CD14-positive monocyte (primary cell): ENCODE measurements at regions of chr2 and their contacts with region 1.

Region 1: DNA sequence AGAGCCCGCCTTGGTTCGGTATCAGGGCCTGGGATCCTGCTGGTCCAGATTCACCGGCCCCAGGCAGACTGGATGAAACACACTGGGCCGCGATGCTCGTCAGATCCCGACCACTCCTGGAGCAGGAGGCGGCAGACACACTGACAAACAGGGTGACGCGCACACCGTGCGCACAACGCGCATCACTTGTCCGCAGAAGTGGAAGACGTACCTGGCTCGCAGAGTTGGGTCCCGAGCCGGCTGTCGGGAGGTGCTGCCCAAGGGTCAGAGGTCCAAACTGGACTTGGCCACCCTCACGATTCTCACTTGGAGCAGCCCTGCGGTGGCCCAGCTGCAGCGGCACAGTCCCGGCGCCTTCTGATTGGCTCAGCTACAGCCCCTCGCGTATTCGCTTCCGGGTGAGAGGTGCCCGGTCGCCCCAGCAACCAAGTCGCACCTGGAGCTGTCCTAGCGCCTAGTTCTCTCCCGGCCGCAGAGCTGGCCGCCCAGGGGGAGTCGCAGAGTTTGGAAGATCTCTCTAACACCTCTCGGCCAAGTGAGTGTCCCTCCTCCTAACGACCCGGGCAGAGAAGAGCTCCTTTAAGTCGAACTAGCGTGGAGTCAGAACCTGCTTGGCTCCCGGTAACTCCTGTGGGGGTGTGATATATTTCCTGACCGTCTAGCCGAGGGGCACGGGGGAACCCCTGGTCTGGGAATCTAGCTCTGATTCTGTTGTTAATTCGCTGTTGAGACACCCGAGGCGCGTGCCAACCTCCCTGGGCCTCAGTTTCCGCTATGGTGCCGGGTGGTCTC is at the starts of genes DHX57 and MORN2:
- DNase-seq: peak; percentile 69 to 78 (median 74)
- H3K4me3 ChIP-seq: peak within 1 kb of the TSS; percentile 55 to 94 (median 77)
- H3K4me3 Mint-ChIP-seq: peak within 1 kb of the TSS; percentile 96
- H3K27ac ChIP-seq: peak within 1 kb of the TSS; percentile 6 to 78
- H3K27ac Mint-ChIP-seq: peak within 1 kb of the TSS; percentile 77 to 96 (median 94)
- H3K4me1 ChIP-seq: peaks cover 15 to 17% of the 10 kb centered on the region in 2 donors
- H3K4me1 Mint-ChIP-seq: peaks cover 31% of the 10 kb centered on the region
- H3K27me3 ChIP-seq: no peaks in the 10 kb centered on the region
- H3K27me3 Mint-ChIP-seq: no peaks in the 10 kb centered on the region
- CTCF ChIP-seq: no peak
- polyA plus RNA-seq, gene DHX57: 7.7 to 13.4 (median 12.9) TPM
- polyA plus RNA-seq, gene MORN2: 5.8 to 25.8 (median 24.0) TPM

Region 2: DNA sequence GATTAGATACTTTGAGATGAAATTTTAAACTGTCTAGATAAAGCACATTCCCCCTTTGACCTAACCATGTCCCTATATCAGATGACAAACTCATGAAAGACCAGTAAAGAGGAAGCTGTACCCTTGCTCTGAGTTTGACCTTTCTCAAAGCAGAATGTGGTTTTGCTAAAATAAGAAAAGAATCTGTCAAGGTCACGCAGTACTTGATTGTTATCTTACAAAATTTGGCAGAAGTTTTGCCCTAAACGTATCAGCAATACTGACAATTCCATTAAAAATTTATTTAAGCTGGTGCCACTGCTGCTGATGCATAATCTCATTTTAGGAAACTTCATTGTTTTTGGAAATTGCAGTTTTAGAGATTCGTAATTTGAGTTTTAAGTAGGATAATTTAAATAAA is 241.1 kb before region 1 on chr2:
- intact Hi-C with region 1: no loop called
- DNase-seq: peak; percentile 48 to 59 (median 56)
- H3K4me3 ChIP-seq: no peak overlapping the region
- H3K4me3 Mint-ChIP-seq: no peak overlapping the region
- H3K27ac ChIP-seq: no peak overlapping the region
- H3K27ac Mint-ChIP-seq: no peak overlapping the region
- H3K4me1 ChIP-seq: peaks cover 15 to 17% of the 10 kb centered on the region in 2 donors
- H3K4me1 Mint-ChIP-seq: peaks cover 19% of the 10 kb centered on the region
- H3K27me3 ChIP-seq: no peaks in the 10 kb centered on the region
- H3K27me3 Mint-ChIP-seq: peaks cover 0 to 6% (median 5%) of the 10 kb centered on the region in 3 donors
- CTCF ChIP-seq: no peak

Region 3: DNA sequence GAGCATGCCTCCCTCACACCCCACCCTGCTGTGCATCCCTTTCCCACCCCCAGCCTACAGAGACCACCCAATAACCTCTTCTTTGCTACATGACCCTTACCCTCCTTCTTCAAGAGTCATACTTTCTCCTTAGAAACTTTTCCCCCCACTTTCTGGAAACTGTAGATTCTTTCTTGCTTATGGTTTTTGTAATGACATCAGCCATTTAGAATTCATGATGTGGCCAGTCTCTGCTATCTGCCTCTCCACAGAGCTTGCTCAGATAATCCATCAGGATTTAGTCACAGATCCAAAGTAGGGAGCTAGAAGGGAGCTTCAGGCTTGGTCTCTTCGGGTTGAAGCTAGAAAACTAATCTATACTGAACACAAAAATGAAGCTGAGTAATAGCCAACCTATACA is 173.4 kb before region 1 on chr2:
- intact Hi-C with region 1: no loop called
- DNase-seq: no peak
- H3K4me3 ChIP-seq: no peak overlapping the region
- H3K4me3 Mint-ChIP-seq: no peak overlapping the region
- H3K27ac ChIP-seq: no peak overlapping the region
- H3K27ac Mint-ChIP-seq: no peak overlapping the region
- H3K4me1 ChIP-seq: no peaks in the 10 kb centered on the region
- H3K4me1 Mint-ChIP-seq: no peaks in the 10 kb centered on the region
- H3K27me3 ChIP-seq: no peaks in the 10 kb centered on the region
- H3K27me3 Mint-ChIP-seq: peaks cover 0 to 1% (median 0%) of the 10 kb centered on the region in 3 donors
- CTCF ChIP-seq: no peak

Region 4: DNA sequence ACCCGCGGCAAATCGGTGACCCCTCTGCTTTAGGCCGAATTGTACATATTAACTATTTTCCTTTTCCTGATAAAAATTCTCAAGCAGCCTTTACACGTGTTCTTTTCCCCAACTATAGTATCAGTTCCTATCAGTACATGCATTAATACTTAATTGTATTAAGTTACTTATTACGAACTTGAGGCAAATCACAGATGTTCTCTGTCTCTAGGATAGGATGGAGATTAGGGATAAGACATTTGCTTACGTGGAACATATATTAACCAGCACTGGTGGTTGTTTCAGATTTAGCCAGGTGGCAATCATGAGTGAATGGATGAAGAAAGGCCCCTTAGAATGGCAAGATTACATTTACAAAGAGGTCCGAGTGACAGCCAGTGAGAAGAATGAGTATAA is 97.1 kb before region 1 on chr2:
- intact Hi-C with region 1: loop called in 1 of 2 experiments (anchors 5 kb)
- DNase-seq: no peak
- H3K4me3 ChIP-seq: peak overlapping the region; percentile 59 to 99 (median 94)
- H3K4me3 Mint-ChIP-seq: peak overlapping the region; percentile 87 to 96
- H3K27ac ChIP-seq: peak overlapping the region; percentile 12 to 91
- H3K27ac Mint-ChIP-seq: peak overlapping the region; percentile 87 to 95 (median 91)
- H3K4me1 ChIP-seq: peaks cover 12 to 13% of the 10 kb centered on the region in 2 donors
- H3K4me1 Mint-ChIP-seq: peaks cover 11% of the 10 kb centered on the region
- H3K27me3 ChIP-seq: peaks cover 0 to 9% of the 10 kb centered on the region in 2 donors
- H3K27me3 Mint-ChIP-seq: peaks cover 13 to 16% (median 14%) of the 10 kb centered on the region in 3 donors
- CTCF ChIP-seq: no peak

Region 5: GRCh38 chr2:38830526-38831159 is 45.1 kb before region 1 on chr2:
- intact Hi-C with region 1: loop called in 1 of 2 experiments (anchors 5 kb)
- DNase-seq: peak; percentile 58 to 79 (median 75)
- H3K4me3 ChIP-seq: no peak overlapping the region
- H3K4me3 Mint-ChIP-seq: no peak overlapping the region
- H3K27ac ChIP-seq: peak overlapping the region; percentile 84 to 92
- H3K27ac Mint-ChIP-seq: peak overlapping the region; percentile 90 to 96 (median 95)
- H3K4me1 ChIP-seq: peaks cover 82 to 84% of the 10 kb centered on the region in 2 donors
- H3K4me1 Mint-ChIP-seq: peaks cover 47% of the 10 kb centered on the region
- H3K27me3 ChIP-seq: no peaks in the 10 kb centered on the region
- H3K27me3 Mint-ChIP-seq: no peaks in the 10 kb centered on the region
- CTCF ChIP-seq: no peak